Dendritic cell treated with granulocyte-macrophage colony-stimulating factor and Interleukin-4, amounts not matched to agents 40 ng/mL and 50 ng/mL, for 4 days (primary cell): ENCODE measurements at regions of chr22 and their contacts with region 1.

Region 1: DNA sequence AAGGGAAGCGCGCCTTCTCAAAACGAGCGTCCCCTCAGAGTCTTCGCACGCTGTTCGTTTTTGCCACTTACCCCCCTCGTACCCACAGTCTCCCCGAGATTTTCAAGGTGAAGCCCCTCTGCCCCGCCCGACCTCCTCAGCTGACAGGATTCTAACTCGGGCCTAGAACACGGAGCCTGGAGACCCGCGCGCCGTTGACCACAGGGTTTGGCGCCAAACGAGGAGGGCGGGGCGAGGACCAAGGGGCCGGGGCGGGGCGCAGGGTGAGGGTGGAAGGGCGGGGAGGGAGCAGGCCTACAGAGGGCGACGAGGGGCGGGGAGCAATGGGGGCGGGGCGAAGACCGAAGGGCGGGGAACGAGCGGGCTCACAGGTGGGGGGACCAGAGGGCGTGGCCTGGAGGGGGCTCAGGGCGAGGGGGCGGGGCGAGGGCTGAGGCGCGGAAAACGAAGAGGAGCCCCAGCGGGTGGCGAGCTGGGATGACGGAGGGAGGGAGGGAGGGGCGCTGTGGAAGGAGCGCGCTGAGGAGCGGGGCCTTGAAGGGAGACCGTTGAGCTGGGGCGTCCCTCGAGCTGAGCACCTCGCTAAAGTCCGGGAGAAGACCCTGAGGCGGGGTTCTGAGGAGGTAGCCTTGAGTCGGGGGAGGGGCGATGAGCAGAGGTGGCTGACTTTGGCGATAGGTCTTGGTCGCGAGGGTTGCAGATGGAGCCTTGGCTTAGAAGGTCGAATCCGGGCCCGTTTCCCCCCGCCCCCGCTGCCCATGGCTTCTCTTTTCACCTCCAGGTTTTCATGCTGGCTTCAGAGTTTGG is at the start of gene DMC1:
- H3K4me3 Mint-ChIP-seq: peak within 1 kb of the TSS; percentile 55
- H3K27ac Mint-ChIP-seq: no peak within 1 kb of the TSS
- H3K4me1 Mint-ChIP-seq: peaks cover 25% of the 10 kb centered on the region
- H3K27me3 Mint-ChIP-seq: peaks cover 92% of the 10 kb centered on the region

Region 2: DNA sequence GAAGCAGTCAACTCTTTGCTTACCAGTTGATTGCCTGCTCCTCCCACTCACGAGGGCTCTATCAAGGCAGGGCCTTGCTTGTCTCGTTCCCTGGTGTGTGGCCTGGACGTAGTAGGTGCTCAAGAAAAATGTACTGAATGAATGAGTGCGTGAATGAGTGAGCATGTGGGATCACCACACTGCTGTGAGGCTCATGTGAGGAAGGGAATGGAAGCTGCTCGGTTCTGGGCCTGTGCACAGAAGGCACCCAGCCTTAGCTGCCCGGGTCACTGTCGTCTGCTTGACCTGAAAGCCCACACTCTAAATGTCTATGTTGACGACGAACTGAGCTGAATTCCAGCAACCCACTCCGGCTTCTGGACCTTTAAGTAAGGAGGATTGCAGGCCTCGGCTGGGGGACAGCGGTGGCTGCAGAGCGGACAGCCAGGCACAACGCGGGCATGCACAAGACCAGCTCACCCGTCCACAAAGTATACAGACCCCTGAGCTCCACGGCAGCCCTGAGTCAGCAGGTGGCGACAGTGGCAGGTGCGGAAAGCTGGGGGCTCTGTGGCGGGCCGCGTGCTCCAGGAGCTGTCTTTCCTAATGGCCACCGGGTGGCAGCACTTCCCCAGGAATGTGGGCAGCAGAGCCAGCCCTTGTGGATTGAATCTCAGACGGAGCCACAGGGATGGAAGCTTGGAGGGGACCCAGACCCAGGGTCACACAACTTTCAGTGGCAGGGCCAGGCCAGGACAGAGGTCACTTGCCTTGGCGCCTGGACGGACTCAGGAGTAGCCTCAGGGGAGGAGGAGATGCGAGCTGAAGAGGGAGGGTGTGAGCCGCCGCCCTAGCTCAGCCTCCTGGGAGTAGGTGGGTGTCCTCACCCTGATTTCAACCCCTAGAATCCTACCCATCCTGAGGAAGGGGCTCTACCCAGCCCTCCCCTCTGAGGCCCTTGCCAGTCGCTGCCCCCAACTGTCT is 518.0 kb before region 1 on chr22:
- intact Hi-C with region 1: loop called (anchors 5 kb)
- H3K4me3 Mint-ChIP-seq: no peak overlapping the region
- H3K27ac Mint-ChIP-seq: no peak overlapping the region
- H3K4me1 Mint-ChIP-seq: peaks cover 18% of the 10 kb centered on the region
- H3K27me3 Mint-ChIP-seq: peaks cover 62% of the 10 kb centered on the region

Region 3: DNA sequence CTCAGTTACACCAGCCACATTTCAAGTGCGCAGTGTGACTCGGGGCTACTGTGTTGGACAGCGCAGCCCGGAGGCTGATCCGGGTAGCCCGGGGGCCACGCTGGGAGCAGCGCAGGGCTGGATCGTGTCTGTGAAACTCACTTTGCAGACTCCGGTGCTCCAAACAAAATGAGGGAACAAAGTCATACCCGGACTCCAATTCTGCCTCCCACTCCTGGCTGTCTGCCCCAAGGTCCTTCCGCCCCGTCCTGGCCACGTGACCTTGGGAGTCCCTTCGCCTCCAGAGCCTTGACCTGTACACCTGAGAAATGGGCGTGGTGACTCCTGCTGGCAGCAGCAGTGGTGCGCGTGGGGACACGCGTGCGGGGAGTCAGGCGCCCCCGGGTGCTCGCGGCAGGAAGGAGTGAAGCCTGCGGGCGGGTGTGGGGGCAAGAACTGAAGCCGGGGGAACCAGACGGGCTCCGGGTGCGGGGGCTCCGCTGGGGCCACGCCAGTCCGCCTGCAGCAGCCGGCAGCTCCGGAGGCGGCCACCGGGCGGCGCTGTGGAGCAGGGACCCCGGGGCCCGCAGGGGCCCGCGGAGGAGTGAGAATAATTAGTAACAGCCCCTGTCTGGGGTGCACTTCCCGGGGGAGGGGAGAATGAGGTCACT is 157.6 kb before region 1 on chr22:
- intact Hi-C with region 1: loop called (anchors 10 kb)
- H3K4me3 Mint-ChIP-seq: peak overlapping the region; percentile 53
- H3K27ac Mint-ChIP-seq: no peak overlapping the region
- H3K4me1 Mint-ChIP-seq: peaks cover 32% of the 10 kb centered on the region
- H3K27me3 Mint-ChIP-seq: peaks cover 43% of the 10 kb centered on the region